Heart right ventricle (tissue), 16 donors: ENCODE measurements at regions of chrX and their contacts with region 1.

Region 1: DNA sequence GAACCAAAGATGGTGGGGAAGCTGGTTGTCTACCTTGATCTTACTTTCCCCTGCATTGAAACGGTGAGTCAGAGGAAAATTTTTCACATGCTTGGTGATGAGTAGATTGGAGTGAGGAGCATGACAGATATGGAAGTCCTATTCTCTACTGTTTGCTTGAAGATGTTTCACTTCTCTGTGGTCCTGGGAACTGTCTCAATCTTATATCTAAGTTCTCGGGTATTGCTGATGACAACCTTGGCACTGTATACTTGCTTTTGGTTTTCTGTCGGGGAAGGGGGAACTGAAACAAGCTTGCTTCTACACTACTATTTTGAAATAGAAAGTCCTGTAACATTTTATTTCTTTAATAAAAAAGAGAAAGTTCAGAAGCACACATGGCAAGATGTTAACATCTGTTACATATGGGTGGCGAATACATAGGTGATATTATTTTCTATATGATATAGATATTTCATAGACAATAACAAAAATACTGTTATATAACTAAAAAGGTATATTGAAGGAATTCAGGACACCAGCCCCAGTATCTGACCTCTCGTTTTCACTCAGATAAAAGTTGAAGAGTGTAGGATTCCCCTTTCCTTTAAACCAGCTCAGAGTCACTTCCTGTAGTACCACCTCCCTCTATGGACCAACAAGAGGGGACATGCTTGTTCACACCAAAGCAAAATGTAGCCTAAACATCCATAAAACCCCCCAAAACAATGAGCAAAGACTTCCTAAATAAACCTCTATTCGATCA is 88.8 kb downstream of the FMR1NB start:
- DNase-seq: no peak
- ATAC-seq: no peak
- H3K4me3 ChIP-seq: no peak overlapping the region
- H3K27ac ChIP-seq: no peak overlapping the region
- H3K4me1 ChIP-seq: no peaks in the 10 kb centered on the region
- H3K27me3 ChIP-seq: no peaks in the 10 kb centered on the region
- CTCF ChIP-seq: no peak

Region 2: GRCh38 chrX:148024425-148025148 is 45.3 kb before region 1 on chrX:
- intact Hi-C with region 1: no loop called
- DNase-seq: no peak
- ATAC-seq: no peak
- H3K4me3 ChIP-seq: no peak overlapping the region
- H3K27ac ChIP-seq: no peak overlapping the region
- H3K4me1 ChIP-seq: no peaks in the 10 kb centered on the region
- H3K27me3 ChIP-seq: no peaks in the 10 kb centered on the region
- CTCF ChIP-seq: no peak

Region 3: GRCh38 chrX:148056030-148056429 is 13.9 kb before region 1 on chrX:
- intact Hi-C with region 1: loop called in 1 of 10 experiments (anchors 1 kb)
- DNase-seq: no peak
- ATAC-seq: no peak
- H3K4me3 ChIP-seq: no peak overlapping the region
- H3K27ac ChIP-seq: no peak overlapping the region
- H3K4me1 ChIP-seq: no peaks in the 10 kb centered on the region
- H3K27me3 ChIP-seq: peaks cover 0 to 7% (median 0%) of the 10 kb centered on the region in 7 donors
- CTCF ChIP-seq: no peak